Calu3 (cell line): ENCODE measurements at regions of chr2 and their contacts with region 1.

Region 1: GRCh38 chr2:201231781-201232466 is 28.4 kb upstream of the CASP8 start:
- DNase-seq: peak; percentile 96
- H3K4me3 Mint-ChIP-seq: peak overlapping the region; percentile 93
- H3K27ac Mint-ChIP-seq: peak overlapping the region; percentile 77
- H3K4me1 Mint-ChIP-seq: peaks cover 33% of the 10 kb centered on the region
- H3K27me3 Mint-ChIP-seq: no peaks in the 10 kb centered on the region
- CTCF ChIP-seq: peak; percentile 90

Region 2: GRCh38 chr2:200888704-200889625 is 343.0 kb before region 1 on chr2 and contains the starts of genes NIF3L1 and PPIL3:
- CTCF ChIA-PET with region 1: interaction called, 5 read pairs
- intact Hi-C with region 1: loop called (anchors 5 kb)
- DNase-seq: peak; percentile 97
- H3K4me3 Mint-ChIP-seq: peak within 1 kb of the TSS; percentile 96
- H3K27ac Mint-ChIP-seq: peak within 1 kb of the TSS; percentile 99
- H3K4me1 Mint-ChIP-seq: peaks cover 18% of the 10 kb centered on the region
- H3K27me3 Mint-ChIP-seq: no peaks in the 10 kb centered on the region
- CTCF ChIP-seq: no peak
- total RNA-seq, gene NIF3L1: 38.4 and 39.7 TPM in 2 replicates
- total RNA-seq, gene PPIL3: 28.0 and 31.5 TPM in 2 replicates

Region 3: GRCh38 chr2:201164166-201164565 is 67.8 kb before region 1 on chr2:
- CTCF ChIA-PET with region 1: no interaction called
- intact Hi-C with region 1: no loop called
- DNase-seq: no peak
- H3K4me3 Mint-ChIP-seq: no peak overlapping the region
- H3K27ac Mint-ChIP-seq: no peak overlapping the region
- H3K4me1 Mint-ChIP-seq: no peaks in the 10 kb centered on the region
- H3K27me3 Mint-ChIP-seq: no peaks in the 10 kb centered on the region
- CTCF ChIP-seq: no peak

Region 4: DNA sequence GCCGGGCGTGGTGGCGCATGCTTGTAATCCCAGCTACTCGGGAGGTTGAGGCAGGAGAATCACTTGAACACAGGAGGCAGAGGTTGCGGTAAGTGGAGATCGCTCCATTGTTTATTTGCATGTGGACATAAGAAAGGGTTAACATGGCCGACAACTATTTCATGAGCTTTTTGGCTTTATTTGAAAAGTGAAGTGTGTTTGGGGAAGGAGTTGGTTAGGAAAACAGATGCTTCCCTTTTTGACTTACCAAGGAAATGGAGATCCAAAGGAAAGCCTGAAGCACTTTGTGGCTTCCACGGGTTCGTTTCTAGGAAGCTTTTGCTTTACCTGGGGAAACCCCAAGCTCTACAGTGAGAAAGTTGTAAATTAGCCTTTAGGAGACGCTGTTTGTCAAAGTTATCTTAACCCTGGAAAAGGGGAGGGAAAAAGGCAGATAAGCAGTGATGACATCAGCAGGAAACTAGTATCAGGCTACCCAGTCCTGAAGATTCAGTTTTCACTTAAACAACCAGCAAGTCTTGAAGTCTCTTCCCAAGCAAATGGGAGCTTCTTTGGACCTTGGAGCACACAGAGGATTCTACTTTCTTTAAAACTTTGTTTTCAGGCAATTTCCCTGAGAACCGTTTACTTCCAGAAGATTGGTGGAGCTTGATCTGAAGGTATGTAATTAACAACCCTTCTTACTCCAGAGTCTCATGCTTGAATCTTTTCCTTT is 49.1 kb before region 1 on chr2 and contains the start of gene CASP10:
- CTCF ChIA-PET with region 1: interaction called, 61 read pairs
- intact Hi-C with region 1: loop called (anchors 1 kb)
- DNase-seq: peak; percentile 54
- H3K4me3 Mint-ChIP-seq: peak within 1 kb of the TSS; percentile 91
- H3K27ac Mint-ChIP-seq: peak within 1 kb of the TSS; percentile 94
- H3K4me1 Mint-ChIP-seq: peaks cover 10% of the 10 kb centered on the region
- H3K27me3 Mint-ChIP-seq: no peaks in the 10 kb centered on the region
- CTCF ChIP-seq: peak; percentile 51
- total RNA-seq, gene CASP10: 21.4 and 22.5 TPM in 2 replicates

Region 5: DNA sequence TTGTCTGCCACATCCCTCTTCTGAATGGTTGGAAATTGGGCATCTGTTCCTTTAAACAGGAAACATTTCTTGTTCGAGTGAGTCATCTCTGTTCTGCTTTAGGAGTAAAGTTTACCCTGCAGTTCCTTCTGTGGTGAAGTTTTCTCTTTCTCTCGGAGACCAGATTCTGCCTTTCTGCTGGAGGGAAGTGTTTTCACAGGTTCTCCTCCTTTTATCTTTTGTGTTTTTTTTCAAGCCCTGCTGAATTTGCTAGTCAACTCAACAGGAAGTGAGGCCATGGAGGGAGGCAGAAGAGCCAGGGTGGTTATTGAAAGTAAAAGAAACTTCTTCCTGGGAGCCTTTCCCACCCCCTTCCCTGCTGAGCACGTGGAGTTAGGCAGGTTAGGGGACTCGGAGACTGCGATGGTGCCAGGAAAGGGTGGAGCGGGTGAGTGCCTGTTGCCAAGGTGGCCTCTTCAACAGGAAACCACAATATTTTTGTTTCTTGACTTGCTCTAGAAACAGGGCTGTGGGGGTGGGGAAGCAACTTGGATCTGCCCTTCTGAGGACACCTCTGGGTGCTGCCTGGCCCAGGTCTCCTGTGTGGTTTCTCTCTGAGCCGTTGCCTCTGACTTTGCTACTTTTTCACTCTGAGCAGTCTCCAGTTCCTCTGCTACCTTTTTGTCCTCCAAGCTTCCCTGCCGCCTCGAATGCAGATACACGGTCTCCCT is 26.2 kb after region 1 on chr2:
- CTCF ChIA-PET with region 1: interaction called, 5 read pairs
- intact Hi-C with region 1: loop called (anchors 2 kb)
- DNase-seq: peak; percentile 91
- H3K4me3 Mint-ChIP-seq: peak overlapping the region; percentile 78
- H3K27ac Mint-ChIP-seq: peak overlapping the region; percentile 93
- H3K4me1 Mint-ChIP-seq: peaks cover 87% of the 10 kb centered on the region
- H3K27me3 Mint-ChIP-seq: no peaks in the 10 kb centered on the region
- CTCF ChIP-seq: no peak

Region 6: GRCh38 chr2:201642579-201643215 is 410.8 kb after region 1 on chr2:
- CTCF ChIA-PET with region 1: no interaction called
- intact Hi-C with region 1: loop called (anchors 10 kb)
- DNase-seq: peak; percentile 92
- H3K4me3 Mint-ChIP-seq: peak overlapping the region; percentile 95
- H3K27ac Mint-ChIP-seq: peak overlapping the region; percentile 96
- H3K4me1 Mint-ChIP-seq: peaks cover 23% of the 10 kb centered on the region
- H3K27me3 Mint-ChIP-seq: no peaks in the 10 kb centered on the region
- CTCF ChIP-seq: no peak